ENCODE measurements at regions of chr3 and their contacts with region 1.

Region 1: DNA sequence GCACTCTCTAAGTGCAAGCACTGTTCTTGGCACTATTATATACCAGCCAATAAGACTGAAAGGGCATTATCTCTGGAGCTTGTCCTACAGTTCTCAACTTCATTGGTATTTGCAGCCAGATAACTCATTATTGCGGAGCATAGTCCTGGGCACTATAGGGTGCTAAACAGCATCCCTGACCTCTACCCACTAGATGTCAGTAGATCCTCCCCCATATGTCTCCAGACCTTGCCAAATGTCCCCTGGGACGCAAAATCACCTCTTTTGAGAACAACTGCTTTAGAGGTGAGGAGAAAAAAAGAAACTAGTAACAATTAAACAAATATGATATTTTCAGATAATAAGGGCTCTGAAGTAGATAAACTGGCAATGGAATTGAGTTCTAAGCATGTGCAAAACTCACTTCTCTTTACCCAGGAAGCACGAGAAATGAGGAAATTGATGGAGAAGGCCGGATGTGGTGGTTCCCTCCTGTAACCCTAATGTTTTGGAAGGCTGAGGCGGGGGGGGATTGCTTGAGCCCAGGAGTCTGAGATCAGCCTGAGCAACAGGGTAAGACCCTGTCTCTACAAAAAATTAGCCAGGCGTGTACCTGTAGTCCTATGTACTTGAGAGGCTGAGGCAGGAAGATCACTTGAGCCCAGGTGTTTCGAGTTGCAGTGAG is 61.4 kb downstream of the FRMD4B start:
- DNase-seq: no peak

Region 2: GRCh38 chr3:69129531-69129930 is 195.0 kb before region 1 on chr3:
- intact Hi-C with region 1: no loop called
- DNase-seq: no peak

Region 3: GRCh38 chr3:69385723-69386555 is 61.4 kb after region 1 on chr3 and contains the start of gene FRMD4B:
- intact Hi-C with region 1: loop called (anchors 5 kb)
- DNase-seq: peak; percentile 85 to 99 (median 90)

Region 4: DNA sequence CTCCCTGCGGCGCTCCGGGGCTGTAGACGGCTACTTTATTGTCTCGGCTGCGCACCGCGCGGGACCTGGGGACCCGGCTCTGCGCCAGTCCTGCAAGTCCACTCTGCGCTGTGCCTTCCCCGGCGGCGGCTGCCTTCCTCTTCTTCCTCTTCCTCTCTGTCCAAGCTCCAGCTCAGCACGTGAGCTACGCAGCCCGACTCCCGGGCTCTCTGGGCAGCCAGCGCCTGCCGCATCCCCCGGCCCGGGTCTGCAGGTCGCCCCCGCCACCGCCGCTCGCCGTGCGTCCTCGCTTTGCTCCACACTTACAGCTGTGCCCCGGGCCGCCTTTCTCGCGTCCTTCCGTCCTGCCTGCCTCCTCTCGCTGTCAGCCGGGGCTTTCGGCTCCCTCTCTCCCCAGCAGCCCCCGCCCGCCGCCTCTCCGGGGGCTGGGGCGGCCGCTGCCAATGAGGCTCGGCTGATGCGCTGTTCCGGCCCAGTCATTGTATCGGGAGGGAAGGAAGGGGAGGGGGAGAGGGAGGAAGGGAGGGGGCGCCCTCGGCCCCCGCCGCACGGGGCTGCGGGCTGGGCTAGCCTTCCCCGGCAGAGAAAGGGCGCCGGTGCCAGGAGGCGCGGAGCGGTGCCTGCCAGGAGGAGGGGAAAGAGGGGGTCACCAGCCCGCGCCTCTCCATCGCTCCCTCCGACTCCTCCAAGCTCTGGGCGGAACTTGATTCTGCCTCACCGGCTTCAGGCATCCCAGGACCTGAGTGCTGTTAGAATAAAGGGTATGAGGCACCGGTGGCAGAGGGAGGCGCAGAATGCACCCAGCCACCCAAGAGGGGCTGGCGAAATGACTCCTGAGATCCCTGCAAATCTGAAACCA is 218.0 kb after region 1 on chr3:
- intact Hi-C with region 1: loop called (anchors 10 kb)
- DNase-seq: peak; percentile 60 to 97 (median 74)